Posterior vena cava (tissue), 2 donors: ENCODE measurements at regions of chr2 and their contacts with region 1.

Region 1: GRCh38 chr2:171735991-171736710 is 48.9 kb downstream of the DYNC1I2 start:
- DNase-seq: no peak

Region 2: DNA sequence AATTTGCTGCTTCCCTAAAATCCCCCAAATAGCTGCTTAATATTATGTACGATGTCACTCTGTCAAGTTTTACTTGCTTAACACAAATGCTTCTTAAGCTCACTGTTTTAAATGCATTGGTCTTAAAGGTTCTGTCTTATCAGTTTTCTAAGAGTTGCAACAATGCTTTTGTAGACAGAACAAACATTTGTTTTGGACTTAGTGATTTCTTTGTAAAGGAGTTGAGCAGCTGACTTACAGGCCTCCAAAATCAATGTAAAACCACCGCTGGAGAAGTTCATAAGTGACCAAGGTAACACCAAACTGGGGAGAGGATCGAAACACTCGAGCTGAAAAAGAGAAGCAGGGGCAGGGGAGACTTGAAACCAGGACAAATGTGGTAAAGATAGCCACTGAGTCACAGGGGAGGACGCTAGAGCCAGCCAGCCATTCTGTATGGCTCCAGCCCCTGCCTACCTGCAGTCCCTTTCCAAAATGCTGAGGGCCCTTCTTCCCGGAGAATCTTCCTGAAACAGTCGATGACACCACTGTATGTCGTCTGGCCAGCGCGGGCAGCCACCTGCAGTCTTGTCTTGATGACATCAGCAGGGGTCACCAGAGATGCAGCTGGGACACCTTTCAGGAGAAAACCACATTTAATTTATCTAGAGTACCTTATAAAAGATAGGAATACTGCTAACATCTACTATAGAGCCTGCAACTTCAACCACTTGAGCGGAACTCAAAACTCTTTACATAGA is 51.4 kb after region 1 on chr2:
- intact Hi-C with region 1: loop called in 1 of 2 experiments (anchors 5 kb)
- DNase-seq: no peak